ENCODE measurements at regions of chr11 and their contacts with region 1.

Region 1: DNA sequence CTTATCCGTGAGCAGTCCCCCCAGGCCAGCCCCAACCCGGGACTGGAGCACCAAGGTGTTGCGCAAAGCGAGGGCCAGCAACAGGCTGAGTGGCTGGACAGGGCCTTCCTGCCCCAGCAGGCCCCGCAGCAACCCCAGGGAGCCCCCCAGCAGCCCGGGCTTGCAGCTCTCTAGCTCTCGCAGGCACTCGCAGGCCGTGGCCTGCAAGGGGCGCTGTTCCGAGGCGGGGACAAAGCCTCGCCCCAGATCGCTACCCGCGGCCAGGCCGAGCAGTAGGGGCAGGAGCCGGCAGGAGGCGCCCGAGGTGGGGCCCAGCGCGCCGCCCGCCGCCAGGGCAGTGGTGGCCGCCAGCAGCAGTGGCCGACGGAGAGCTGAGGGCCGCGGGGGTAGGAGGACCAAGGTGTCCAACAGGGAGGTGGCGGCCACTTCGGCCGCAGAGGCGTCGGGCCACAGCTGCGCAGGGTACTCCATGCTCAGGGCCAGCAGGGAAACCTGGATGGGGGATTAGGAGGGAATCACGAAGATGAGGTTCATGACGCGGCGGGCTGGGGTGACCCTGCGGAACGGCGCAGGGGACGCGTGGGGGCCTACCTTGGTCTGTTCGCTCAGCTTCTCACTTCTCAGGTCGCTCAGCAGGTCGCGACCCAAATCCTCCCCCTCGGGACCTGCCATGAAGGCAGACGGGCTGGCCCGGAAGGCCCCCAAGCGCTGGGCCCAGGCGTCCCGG is 762 bp downstream of the AP5B1 start:
- DNase-seq: peak; percentile 92
- CTCF ChIP-seq: peak; percentile 99

Region 2: GRCh38 chr11:65595543-65596281 is 184.3 kb before region 1 on chr11 and contains the start of gene KCNK7:
- CTCF ChIA-PET with region 1: no interaction called
- POLR2A ChIA-PET with region 1: no interaction called
- DNase-seq: peak; percentile 31
- CTCF ChIP-seq: no peak

Region 3: GRCh38 chr11:65720237-65720934 is 59.6 kb before region 1 on chr11 and contains the start of gene RNASEH2C:
- CTCF ChIA-PET with region 1: interaction called, 26 read pairs
- POLR2A ChIA-PET with region 1: no interaction called
- DNase-seq: peak; percentile 93
- CTCF ChIP-seq: no peak

Region 4: GRCh38 chr11:65766535-65766934 is 13.5 kb before region 1 on chr11:
- CTCF ChIA-PET with region 1: interaction called, 41 read pairs
- POLR2A ChIA-PET with region 1: interaction called, 4 read pairs
- DNase-seq: no peak
- CTCF ChIP-seq: no peak

Region 5: DNA sequence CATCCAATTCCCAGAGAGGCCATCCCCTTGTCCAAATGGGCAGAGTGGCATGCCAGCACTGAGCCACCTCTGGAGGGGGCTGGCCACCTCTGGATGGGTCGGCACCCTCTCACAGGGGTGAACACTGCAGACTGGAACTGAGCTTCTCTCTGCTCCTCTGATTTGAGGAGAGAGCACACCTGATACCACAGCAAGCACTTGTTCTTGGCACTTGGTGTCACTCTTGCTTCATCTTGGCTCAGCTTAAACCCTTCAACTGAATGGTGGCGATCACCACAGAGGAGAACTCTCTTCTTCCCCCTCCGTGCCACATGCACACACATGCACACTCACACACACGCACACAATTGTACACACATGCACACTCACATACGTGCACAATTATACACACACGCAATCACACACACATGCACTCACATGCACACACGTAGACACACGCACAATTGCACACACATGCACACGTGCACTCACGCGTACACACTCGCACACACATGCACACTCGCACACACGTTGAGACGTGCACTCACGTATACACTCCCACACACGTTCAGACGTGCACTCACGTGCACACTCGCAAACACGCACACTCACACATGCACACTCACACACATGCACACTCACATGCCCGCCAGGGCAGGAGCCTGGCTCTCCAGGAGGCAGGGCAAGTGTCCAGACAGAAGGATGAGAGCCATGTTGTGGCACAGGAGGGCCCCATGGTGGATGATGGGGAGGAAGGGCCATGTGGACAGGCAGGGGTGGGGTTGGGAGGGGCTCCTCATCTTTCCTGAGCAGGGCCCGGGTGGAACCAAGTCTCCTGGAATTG is 30.2 kb after region 1 on chr11:
- CTCF ChIA-PET with region 1: interaction called, 145 read pairs
- POLR2A ChIA-PET with region 1: no interaction called
- DNase-seq: no peak
- CTCF ChIP-seq: no peak

Region 6: DNA sequence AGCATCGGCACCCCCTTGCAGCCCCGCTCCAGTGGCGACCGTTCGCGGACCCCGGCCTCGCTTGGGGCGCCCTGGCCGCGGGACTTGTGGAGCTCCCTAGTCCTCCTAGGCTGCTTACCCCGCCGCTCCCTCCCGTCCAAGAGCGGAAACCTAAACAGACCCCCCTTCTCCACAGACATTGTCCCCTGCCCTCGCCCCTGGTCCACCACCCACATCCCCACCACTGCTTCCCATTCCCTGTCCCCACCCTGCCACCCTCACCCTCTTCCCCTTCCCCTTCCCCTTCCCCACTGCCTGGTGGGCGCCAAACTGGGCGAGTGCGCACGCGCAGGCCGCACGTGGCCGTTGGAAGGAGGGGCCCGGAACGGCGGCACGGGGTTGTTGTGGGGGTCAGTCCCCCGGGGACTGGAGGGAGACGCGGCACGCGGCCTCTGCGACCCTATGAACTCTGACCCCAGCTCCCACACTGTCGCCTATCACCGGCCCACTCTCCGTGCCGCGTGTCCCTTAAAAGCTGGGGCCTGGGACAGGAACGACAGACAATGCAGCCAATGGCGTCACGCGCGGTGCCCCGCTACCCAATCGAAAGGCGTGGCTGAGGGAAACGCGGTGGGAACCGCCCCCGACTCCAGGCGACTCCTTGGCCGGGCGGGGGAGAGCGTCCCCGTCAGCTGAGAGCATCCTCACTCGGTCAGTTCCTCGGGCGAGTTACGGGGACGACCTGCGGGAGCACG is 53.5 kb after region 1 on chr11 and contains the start of gene SNX32:
- CTCF ChIA-PET with region 1: interaction called, 22 read pairs
- POLR2A ChIA-PET with region 1: no interaction called
- DNase-seq: peak; percentile 100
- CTCF ChIP-seq: no peak

Region 7: DNA sequence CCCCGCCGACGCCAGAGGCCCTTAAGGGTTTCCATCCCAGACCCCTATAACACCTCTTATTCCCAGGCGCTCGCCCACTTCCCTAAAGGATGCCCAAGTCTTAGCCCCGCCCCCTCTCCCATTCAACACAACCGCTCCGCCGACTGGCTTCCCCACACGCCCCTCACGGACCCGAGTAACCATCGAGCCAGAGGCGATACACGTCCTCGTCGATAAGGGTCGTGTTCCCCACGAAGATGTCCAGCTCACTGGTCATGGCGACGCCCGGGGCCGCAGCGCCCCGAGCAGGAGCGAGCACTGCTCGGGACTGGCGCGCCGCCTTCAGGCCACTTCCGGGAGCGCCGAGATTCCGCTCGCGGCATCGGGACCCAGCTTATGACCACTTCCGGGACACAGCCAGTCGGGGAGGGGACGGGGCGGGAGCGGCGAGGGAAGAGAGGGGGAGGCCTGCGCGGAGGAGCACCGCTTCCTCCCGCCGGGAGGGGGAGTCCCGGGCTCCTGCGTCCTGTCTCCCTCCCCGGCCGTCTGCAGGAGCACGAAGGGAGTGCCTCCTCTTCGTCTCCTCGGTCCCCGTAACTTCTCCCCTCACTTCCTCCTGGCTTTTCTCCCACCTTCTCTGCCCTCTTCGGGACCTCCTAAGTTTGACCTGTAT is 108.3 kb after region 1 on chr11 and contains the start of gene FIBP:
- CTCF ChIA-PET with region 1: interaction called, 17 read pairs
- POLR2A ChIA-PET with region 1: no interaction called
- DNase-seq: peak; percentile 97
- CTCF ChIP-seq: peak; percentile 73

Measured in GM10248 (cell line).